ENCODE measurements at regions of chr3 and their contacts with region 1.

Region 1: GRCh38 chr3:65793495-65794199 is 245.1 kb downstream of the MAGI1 start:
- DNase-seq: no peak

Region 2: DNA sequence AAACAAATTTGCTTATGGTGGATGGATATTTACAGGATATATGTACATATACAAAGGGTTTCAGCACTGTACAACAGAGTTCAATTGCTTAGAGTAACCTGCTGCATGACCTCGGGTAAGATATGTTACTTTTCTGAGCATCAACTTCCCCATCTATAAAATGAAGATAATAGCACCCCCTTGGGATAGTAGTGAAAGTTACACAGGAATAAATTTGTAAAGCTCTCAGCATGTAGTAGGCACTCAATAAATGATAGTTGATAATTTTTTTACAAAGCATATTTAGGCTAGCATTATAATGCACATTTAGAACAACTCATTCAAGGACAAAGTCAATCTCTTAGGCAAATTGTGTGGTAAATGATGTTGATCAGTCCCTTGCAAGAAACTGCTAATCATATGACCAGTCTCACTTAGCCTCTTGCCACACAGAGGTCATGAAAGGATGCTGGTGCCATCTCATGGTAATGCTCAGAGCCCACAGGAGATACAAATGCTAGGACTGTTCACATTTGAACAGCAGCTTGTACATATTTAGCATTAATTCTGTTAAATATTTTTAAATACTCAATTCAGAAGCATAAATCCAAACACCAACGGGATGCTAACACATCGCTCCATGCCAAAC is 121.2 kb after region 1 on chr3:
- intact Hi-C with region 1: loop called (anchors 10 kb)
- DNase-seq: no peak

Region 3: GRCh38 chr3:66047311-66048050 is 253.8 kb after region 1 on chr3:
- intact Hi-C with region 1: loop called (anchors 10 kb)
- DNase-seq: no peak

Measured in head of caudate nucleus (tissue), 42 donors.